Activated CD8-positive, alpha-beta T cell treated with anti-CD3 and anti-CD28 coated beads for 36 hours (primary cell): ENCODE measurements at regions of chr21 and their contacts with region 1.

Region 1: DNA sequence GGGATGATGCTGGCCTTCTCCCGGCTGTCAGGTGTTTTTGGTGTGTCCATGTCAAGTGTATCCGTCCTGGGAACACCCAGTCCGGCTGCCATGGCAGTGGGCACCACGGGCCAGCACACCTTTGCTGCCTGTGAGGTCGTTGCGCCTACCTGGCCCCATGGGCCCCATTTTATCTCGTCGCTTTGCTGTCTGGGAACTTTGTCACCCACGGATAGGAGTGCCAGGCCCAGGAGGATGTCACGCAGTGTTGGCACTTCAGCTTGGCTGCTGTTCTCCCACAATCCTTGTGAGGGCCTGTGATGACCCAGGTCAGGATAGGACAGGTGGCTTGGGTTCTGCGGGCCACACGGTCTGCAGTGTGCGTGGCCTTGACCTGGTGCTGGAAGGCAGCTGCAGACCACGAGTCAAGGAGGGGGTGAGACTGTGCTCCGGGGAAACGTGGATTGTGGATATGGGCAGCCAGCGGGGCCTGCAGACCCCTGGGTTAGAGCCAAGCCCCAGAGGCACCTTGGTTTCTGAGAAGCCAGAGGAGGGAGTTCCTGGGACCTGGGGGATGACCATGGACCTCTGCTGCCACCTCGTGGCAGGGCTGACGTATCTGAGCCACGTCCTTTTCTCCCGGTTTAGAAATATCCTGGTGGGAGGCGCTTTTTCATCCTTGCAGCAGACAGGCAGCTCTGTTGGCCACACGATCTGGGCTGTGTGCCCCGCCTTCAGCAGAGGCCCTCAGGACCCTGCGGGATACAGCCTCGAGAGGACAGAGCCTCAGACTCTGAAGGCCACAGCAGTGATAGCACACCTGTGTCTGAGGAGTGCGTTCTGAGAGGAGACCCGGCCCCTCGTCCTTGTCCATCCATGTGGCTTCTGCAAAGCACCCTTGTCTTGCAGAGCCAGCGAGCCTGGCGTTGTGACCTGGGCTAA is 161.1 kb upstream of the COL6A1 start:
- DNase-seq: peak; percentile 82
- ATAC-seq: peak; percentile 51
- H3K4me3 Mint-ChIP-seq: no peak overlapping the region
- H3K27ac Mint-ChIP-seq: no peak overlapping the region
- H3K4me1 Mint-ChIP-seq: peaks cover 37% of the 10 kb centered on the region
- H3K27me3 Mint-ChIP-seq: peaks cover 5% of the 10 kb centered on the region
- CTCF ChIP-seq: peak; percentile 91

Region 2: DNA sequence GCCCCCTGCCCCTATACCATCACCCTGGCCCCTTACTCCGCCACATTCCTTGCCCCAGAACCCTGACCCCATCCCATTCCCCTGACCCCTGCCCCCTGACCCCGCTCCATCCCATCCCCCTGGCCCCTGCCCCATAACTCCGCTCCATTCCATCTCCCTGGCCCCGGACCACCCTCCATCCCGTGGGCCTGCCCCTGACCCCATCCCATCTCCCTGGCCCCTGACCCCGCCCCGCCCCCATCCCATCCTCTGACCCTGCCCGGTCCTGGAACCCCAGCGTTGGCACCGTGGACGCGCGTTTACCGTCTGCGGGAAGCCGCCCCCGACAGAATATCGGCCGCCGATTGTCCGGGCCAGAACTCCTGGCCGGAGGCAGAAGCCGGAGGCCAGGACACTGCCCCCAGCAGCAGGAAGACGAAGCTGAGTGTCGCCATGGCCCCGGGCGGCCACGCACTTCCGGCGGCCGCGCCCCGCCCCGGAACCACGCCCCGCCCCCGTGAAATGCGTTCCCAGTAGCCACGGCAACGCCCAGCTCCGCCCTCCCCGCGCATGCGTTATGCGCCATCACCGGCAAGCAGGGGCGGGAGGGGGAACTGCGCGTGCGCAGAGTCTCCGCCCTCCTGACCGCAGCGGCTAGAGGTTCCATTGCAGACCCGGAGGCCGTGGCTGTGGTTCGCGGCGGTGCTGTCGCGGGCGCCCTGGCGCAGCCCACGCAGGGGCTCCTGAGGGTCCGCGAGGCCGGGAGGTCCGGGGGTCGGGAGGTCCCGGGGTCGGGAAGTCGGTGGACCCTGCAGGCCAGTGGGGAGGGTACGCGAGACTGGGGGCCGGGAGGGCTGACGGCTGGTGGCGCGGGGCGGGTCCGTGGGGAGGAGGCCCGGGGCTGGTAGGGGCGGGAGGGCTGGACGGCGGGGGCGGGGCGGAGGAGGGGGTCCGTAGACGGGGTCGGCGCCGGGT is 532.7 kb before region 1 on chr21 and contains the start of gene POFUT2:
- CTCF ChIA-PET with region 1: interaction called, 5 read pairs
- POLR2A ChIA-PET with region 1: no interaction called
- intact Hi-C with region 1: loop called (anchors 10 kb)
- DNase-seq: peak; percentile 97
- ATAC-seq: peak; percentile 82
- H3K4me3 Mint-ChIP-seq: peak within 1 kb of the TSS; percentile 77
- H3K27ac Mint-ChIP-seq: peak within 1 kb of the TSS; percentile 74
- H3K4me1 Mint-ChIP-seq: peaks cover 8% of the 10 kb centered on the region
- H3K27me3 Mint-ChIP-seq: no peaks in the 10 kb centered on the region
- CTCF ChIP-seq: no peak
- total RNA-seq, gene POFUT2: 11.7 to 12.4 TPM

Region 3: DNA sequence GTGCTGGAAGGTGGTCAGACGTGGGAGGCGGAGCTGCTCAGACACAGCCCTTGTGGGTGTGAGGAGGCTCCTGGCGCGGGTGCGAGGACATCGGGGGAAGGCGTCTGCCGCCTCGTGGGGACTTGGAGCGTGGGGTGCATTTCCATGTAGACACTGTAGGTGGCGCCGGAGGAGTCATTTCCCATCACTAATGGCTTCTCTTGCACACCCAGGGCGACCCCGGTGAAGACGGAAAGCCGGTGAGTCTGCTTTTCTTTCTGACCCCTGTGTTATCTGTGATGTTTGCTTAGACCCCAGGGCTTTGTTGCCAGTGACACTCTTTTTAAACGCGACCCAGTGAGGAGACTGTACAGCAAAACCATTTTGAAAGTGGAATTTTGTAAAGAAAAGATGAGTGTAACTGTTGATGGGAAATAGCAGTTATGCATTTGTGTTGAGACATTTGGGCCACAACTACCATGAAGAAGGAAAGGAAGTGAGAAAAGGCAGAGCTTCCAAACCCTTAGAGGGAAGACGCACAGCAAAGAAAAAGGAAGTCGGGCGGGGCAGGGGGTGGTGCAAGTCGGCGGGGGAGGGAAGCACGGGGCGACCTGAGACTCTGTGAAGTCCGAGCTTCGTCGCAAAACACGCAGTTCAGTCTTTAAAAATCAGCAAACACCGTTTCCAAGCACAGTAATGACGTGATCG is 342.2 kb before region 1 on chr21:
- CTCF ChIA-PET with region 1: interaction called, 4 read pairs
- POLR2A ChIA-PET with region 1: no interaction called
- intact Hi-C with region 1: loop called (anchors 10 kb)
- DNase-seq: peak; percentile 89
- ATAC-seq: peak; percentile 80
- H3K4me3 Mint-ChIP-seq: peak overlapping the region; percentile 67
- H3K27ac Mint-ChIP-seq: peak overlapping the region; percentile 87
- H3K4me1 Mint-ChIP-seq: peaks cover 26% of the 10 kb centered on the region
- H3K27me3 Mint-ChIP-seq: no peaks in the 10 kb centered on the region
- CTCF ChIP-seq: peak; percentile 98

Region 4: GRCh38 chr21:45554477-45555175 is 265.8 kb before region 1 on chr21:
- CTCF ChIA-PET with region 1: interaction called, 5 read pairs
- POLR2A ChIA-PET with region 1: interaction called, 3 read pairs
- intact Hi-C with region 1: loop called (anchors 5 kb)
- DNase-seq: peak; percentile 86
- ATAC-seq: peak; percentile 76
- H3K4me3 Mint-ChIP-seq: peak overlapping the region; percentile 79
- H3K27ac Mint-ChIP-seq: peak overlapping the region; percentile 86
- H3K4me1 Mint-ChIP-seq: peaks cover 25% of the 10 kb centered on the region
- H3K27me3 Mint-ChIP-seq: no peaks in the 10 kb centered on the region
- CTCF ChIP-seq: peak; percentile 72

Region 5: GRCh38 chr21:45698493-45699184 is 121.8 kb before region 1 on chr21:
- CTCF ChIA-PET with region 1: no interaction called
- POLR2A ChIA-PET with region 1: no interaction called
- intact Hi-C with region 1: loop called (anchors 10 kb)
- DNase-seq: peak; percentile 7
- ATAC-seq: peak; percentile 45
- H3K4me3 Mint-ChIP-seq: no peak overlapping the region
- H3K27ac Mint-ChIP-seq: no peak overlapping the region
- H3K4me1 Mint-ChIP-seq: peaks cover 23% of the 10 kb centered on the region
- H3K27me3 Mint-ChIP-seq: no peaks in the 10 kb centered on the region
- CTCF ChIP-seq: no peak

Region 6: GRCh38 chr21:45768751-45769070 is 51.7 kb before region 1 on chr21:
- CTCF ChIA-PET with region 1: interaction called, 4 read pairs
- POLR2A ChIA-PET with region 1: interaction called, 10 read pairs
- intact Hi-C with region 1: loop called (anchors 2 kb)
- DNase-seq: peak; percentile 41
- ATAC-seq: no peak
- H3K4me3 Mint-ChIP-seq: no peak overlapping the region
- H3K27ac Mint-ChIP-seq: peak overlapping the region; percentile 89
- H3K4me1 Mint-ChIP-seq: peaks cover 41% of the 10 kb centered on the region
- H3K27me3 Mint-ChIP-seq: no peaks in the 10 kb centered on the region
- CTCF ChIP-seq: no peak